ENCODE measurements at regions of chr1 and their contacts with region 1.

Region 1: DNA sequence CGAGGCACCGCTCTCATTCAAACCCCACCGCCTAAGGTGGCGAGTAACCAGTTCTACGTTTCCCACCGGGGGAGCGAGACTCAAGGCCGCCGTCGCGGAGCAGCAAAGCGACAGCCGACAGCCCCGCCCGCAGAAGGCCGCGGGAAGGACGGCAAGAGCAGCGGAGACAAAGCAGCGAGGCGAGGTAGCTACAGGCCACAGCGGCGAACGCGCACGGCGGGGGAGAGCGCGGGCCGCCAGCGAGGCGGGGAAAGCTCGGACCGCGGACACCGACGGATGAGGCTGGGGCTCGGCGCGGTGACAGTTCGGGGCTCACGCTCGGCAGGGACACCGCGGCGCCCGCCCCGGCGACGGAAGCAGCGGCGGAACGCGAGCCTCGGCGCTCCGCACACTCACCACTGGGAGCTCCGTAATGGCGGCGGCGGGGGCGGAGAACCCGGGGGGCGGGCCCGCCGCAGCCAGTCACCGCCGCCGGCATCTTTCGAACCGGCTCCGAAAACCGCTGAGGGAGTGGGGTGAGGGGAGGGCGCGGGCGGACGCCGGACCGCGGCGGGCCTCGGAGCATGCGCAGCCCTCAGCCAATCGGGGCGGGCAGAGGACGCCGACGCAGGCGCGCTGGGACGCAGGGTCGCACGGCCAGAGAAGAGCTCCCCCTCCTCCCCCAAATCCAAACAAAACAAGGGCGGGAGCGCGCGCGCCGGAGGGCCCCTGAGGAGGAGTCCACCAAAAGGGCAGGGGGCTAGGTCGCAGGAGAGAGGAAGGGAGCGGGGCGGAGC is 666 bp downstream of the HP1BP3 start:
- DNase-seq: peak; percentile 75 to 97 (median 93)

Region 2: GRCh38 chr1:19825298-19825697 is 961.1 kb before region 1 on chr1:
- intact Hi-C with region 1: no loop called
- DNase-seq: no peak

Region 3: DNA sequence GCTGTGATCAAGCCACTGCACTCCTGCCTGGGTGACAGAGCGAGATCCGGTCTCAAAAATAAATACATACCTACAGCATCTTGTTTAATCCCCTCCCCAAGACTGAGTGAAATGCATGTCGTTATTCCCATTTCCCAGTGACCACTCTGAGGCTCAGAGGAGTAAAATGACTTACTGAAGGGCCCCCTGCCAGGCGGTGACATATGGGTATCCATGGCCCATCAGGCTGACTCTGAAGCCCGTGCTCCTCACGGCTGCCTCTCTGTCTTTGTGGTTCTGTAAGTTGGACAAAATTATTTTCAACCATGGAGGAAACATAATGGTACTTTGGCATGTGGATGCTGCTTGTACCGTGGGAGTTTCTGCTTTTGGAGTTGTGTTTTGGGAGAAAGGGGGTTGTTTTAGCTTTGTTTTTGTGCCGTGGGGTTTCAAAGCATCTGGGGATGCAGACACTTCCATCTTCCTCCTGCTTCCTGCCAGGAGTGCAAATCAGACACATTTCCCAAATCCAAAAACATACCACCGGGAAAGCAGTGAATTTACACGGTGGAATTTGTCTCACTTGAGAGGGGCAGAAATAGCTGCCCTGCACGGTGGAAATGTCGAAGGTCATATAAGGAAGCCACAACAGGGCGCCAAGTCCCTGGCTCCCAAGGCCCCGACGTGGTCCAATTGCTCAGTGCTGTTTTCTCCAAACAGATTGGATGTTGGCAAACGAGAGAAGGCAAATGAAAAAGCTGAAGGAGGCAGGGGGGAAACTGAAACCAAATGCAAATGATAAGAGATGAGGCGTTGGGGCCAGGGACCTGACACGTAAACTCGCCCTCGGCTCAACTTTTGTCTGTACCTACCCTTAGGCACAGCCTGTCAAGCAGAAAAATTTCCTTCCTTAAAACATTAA is 170.2 kb before region 1 on chr1:
- intact Hi-C with region 1: no loop called
- DNase-seq: no peak

Region 4: GRCh38 chr1:21176586-21177555 is 390.4 kb after region 1 on chr1 and contains the start of gene EIF4G3:
- intact Hi-C with region 1: loop called (anchors 10 kb)
- DNase-seq: peak; percentile 95 to 100 (median 99)